GM12878 (cell line): ENCODE measurements at regions of chr6 and their contacts with region 1.

Region 1: DNA sequence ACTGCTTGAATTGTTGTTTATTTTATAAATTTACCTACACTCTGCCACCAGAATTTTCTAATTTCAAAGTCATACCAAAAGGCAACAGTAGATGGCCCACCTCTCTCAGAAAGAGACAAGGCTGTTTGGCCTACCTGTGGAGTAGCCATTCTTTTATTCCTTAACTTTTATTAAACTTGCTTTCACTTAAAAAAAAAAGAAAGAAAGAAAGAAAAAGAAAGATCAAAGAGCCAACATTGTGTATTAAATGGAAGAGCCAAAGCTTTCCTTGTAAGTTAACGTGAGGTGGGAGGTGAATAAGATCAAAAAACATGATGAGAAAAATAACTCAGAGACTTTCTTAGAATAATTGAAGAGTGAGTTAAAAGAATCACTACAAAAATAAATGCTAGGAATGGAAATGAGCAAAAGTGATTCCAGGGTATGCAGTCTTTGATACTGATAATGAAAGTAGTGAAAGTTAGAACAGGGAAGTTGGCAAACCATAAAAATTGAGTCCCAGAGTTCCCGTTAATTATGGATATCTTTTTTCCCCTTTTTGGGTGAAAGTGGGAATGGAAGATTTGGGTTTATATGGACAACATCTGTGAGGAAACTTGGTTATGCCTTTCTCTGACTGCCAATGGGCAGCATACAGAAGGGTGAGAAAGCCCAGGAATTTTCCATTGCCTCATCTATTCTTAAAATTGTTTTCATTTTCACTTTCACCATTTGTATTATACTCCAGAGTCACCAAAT is 35.9 kb upstream of the MYB start:
- DNase-seq: no peak
- ATAC-seq: peak; percentile 75
- H3K4me3 ChIP-seq: 0 out of 2 replicates have a peak overlapping the region, but pooled peaks have one; percentile 18
- H3K27ac ChIP-seq: 0 out of 2 replicates have a peak overlapping the region, but pooled peaks have one; percentile 29
- H3K4me1 ChIP-seq: peaks cover 40% of the 10 kb centered on the region
- H3K27me3 ChIP-seq: no peaks in the 10 kb centered on the region
- CTCF ChIP-seq: peak; percentile 50 to 72 (median 65)
- EP300 ChIP-seq: no peak
- POLR2A ChIP-seq: no peak
- RAD21 ChIP-seq: peak; percentile 93

Region 2: DNA sequence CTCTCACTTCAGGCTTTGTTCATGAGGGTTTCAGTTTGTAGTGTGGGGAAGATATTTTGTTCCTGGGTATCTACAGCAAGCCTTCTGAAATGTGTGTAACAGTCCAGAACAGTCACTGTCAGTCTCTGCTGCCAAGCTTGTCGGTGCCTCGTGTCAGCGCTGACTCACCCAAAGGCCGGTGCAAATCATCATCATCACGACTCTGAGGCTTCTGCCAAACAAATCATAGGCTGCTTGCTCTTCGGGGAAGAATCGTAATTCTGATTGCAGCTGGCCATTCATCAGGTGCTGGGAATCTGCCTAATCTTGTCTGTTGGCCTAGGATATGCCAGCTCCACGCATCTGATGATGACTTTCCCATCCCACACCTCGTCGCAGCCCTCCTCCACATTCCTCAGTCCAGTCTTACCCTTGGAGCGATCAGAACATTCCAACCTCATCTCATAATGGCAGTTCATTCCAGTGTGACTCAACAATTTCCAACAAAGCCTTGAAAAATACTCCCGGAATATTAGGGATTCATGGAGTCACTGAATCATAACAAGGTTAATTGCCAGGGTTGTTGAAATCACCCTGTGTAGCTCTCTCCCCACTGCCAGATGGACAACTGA is 236.2 kb before region 1 on chr6:
- CTCF ChIA-PET with region 1: no interaction called
- POLR2A ChIA-PET with region 1: no interaction called
- RAD21 ChIA-PET with region 1: no interaction called
- SMC1A ChIA-PET with region 1: no interaction called
- in situ Hi-C with region 1: no loop called
- intact Hi-C with region 1: no loop called
- DNase-seq: no peak
- ATAC-seq: no peak
- H3K4me3 ChIP-seq: no peak overlapping the region
- H3K27ac ChIP-seq: no peak overlapping the region
- H3K4me1 ChIP-seq: no peaks in the 10 kb centered on the region
- H3K27me3 ChIP-seq: no peaks in the 10 kb centered on the region; a peak in 1 of 4 replicates
- CTCF ChIP-seq: no peak
- EP300 ChIP-seq: no peak
- POLR2A ChIP-seq: no peak
- RAD21 ChIP-seq: no peak

Region 3: DNA sequence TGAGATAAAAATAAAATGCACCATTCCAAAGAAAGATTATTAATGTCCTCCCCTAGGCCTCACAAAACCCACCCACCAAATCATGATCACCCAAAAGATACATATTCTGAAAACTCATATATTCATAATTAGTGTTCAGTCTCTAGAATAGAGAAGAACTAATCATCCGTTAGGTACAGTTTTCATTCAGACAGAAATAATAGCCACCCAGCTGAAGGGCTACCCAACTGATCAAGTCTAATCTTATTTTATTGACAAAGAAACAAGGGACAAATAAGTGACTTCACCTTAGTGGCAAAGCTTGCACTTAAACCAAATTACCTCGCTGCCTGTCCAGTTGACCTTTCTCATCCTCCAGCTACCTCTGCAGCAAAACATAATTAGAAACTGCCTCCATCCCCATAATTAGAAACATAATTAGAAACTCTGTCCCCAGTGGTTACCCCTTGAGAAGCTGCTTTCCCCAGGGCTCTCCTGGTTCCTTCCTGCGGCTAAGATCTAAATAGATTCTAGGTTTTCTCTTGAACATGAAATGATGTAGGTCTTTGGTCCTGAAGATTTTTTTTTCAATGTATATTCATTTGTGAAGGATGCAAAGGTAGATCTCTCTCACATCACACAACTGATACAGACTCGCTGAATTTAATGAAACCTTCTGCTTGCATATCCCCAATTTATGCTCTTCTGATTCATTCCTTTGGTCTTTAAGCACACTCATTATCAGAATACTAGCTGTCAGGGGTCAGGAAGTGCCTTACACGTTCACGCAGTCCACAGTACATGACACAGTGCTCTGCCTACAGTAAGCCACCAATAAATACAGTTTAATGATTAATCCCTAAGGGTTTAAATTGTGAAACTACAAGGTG is 136.9 kb before region 1 on chr6:
- CTCF ChIA-PET with region 1: interaction called, 5 read pairs
- POLR2A ChIA-PET with region 1: interaction called, 4 read pairs
- RAD21 ChIA-PET with region 1: interaction called, 7 read pairs
- SMC1A ChIA-PET with region 1: interaction called, 13 read pairs
- in situ Hi-C with region 1: no loop called
- intact Hi-C with region 1: loop called (anchors 1 kb)
- DNase-seq: peak; percentile 56
- ATAC-seq: peak; percentile 91
- H3K4me3 ChIP-seq: 0 out of 2 replicates have a peak overlapping the region, but pooled peaks have one; percentile 16
- H3K27ac ChIP-seq: peak overlapping the region; percentile 64
- H3K4me1 ChIP-seq: peaks cover 28% of the 10 kb centered on the region
- H3K27me3 ChIP-seq: no peaks in the 10 kb centered on the region
- CTCF ChIP-seq: no peak
- EP300 ChIP-seq: peak; percentile 43 to 66; a peak in 2 of 4 replicates
- POLR2A ChIP-seq: no peak
- RAD21 ChIP-seq: no peak

Region 4: DNA sequence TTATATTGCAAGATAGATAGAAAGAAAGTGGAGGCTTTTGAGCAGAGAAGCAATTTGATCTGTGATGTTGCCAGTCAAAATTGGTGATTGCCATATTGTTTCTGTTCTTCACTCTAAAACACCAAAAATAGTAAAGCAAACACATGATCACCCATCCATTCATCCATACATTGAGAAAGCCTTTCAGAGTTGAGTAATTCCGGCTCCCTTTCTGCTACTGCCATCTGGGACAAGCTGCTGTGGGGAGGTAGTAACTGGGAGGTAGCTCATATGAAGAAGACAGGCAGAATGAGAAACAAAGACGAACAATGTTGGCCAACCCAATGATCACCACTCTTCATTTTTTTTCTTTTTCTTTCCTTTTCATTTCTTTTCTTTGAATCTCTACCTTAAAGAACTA is 39.5 kb before region 1 on chr6:
- CTCF ChIA-PET with region 1: interaction called, 6 read pairs
- POLR2A ChIA-PET with region 1: interaction called, 4 read pairs
- RAD21 ChIA-PET with region 1: interaction called, 12 read pairs
- SMC1A ChIA-PET with region 1: interaction called, 6 read pairs
- in situ Hi-C with region 1: no loop called
- intact Hi-C with region 1: no loop called
- DNase-seq: no peak
- ATAC-seq: no peak
- H3K4me3 ChIP-seq: no peak overlapping the region
- H3K27ac ChIP-seq: no peak overlapping the region
- H3K4me1 ChIP-seq: peaks cover 3% of the 10 kb centered on the region
- H3K27me3 ChIP-seq: no peaks in the 10 kb centered on the region
- CTCF ChIP-seq: no peak
- EP300 ChIP-seq: no peak
- POLR2A ChIP-seq: no peak
- RAD21 ChIP-seq: no peak

Region 5: DNA sequence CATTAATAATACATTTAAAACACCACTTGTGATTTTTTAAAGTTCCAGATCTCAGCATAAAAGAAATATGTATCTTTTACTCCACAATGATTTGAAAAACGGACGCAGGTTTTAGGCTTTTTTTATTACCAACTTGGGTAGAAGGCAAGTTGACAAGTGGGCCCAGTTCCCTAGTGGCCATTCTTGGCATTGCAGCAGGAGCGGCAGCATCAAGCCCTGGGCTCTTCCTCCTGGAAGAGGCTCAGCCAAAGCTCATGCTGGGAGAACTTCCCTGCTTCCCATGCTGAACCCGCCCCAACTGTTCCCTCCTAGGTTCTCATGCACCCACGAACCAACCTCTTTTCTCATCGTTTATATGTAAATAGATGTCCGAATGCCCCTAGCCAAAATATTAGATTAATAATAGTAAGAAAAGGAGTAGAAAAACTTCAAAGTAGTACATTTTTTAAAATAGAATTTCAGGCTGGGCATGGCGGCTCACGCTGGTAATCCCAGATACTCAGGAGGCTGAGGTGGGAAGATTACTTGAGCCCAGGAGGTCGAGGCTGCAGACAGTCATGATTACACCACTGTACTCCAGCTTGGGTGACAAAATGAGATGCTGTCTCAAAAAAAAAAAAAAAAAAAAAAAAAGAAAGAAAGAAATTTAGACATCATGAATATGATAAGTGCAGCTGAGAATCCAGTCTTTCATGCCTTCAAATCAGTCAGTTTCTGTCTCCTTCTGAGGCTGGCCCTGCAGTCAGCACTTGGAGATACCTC is 17.6 kb after region 1 on chr6:
- CTCF ChIA-PET with region 1: interaction called, 46 read pairs
- POLR2A ChIA-PET with region 1: interaction called, 24 read pairs
- RAD21 ChIA-PET with region 1: interaction called, 26 read pairs
- SMC1A ChIA-PET with region 1: interaction called, 55 read pairs
- in situ Hi-C with region 1: no loop called
- intact Hi-C with region 1: no loop called
- DNase-seq: no peak
- ATAC-seq: peak; percentile 65
- H3K4me3 ChIP-seq: peak overlapping the region; percentile 49; the same call in 1 of the 2 replicates
- H3K27ac ChIP-seq: peak overlapping the region; percentile 75
- H3K4me1 ChIP-seq: peaks cover 28% of the 10 kb centered on the region
- H3K27me3 ChIP-seq: no peaks in the 10 kb centered on the region
- CTCF ChIP-seq: peak; percentile 64 to 93 (median 93)
- EP300 ChIP-seq: no peak
- POLR2A ChIP-seq: no peak; the same call in 1 of the 2 replicates
- RAD21 ChIP-seq: peak; percentile 51

Region 6: GRCh38 chr6:135323202-135323668 is 178.0 kb after region 1 on chr6:
- CTCF ChIA-PET with region 1: interaction called, 10 read pairs
- POLR2A ChIA-PET with region 1: interaction called, 4 read pairs
- RAD21 ChIA-PET with region 1: interaction called, 13 read pairs
- SMC1A ChIA-PET with region 1: interaction called, 11 read pairs
- in situ Hi-C with region 1: no loop called
- intact Hi-C with region 1: loop called (anchors 1 kb)
- DNase-seq: peak; percentile 72
- ATAC-seq: peak; percentile 96
- H3K4me3 ChIP-seq: peak overlapping the region; percentile 51
- H3K27ac ChIP-seq: peak overlapping the region; percentile 80
- H3K4me1 ChIP-seq: peaks cover 22% of the 10 kb centered on the region
- H3K27me3 ChIP-seq: no peaks in the 10 kb centered on the region
- CTCF ChIP-seq: no peak
- EP300 ChIP-seq: peak; percentile 93 to 97
- POLR2A ChIP-seq: no peak
- RAD21 ChIP-seq: 0 out of 2 replicates have a peak, but pooled peaks have one; percentile 3